Tibial artery (tissue), 4 donors: ENCODE measurements at regions of chr4 and their contacts with region 1.

Region 1: GRCh38 chr4:38179690-38180377 is 219.6 kb downstream of the PTTG2 start:
- DNase-seq: peak; percentile 69 to 73
- H3K4me3 ChIP-seq: no peak overlapping the region
- H3K27ac ChIP-seq: no peak overlapping the region
- H3K4me1 ChIP-seq: peaks cover 0 to 8% (median 3%) of the 10 kb centered on the region in 4 donors
- H3K27me3 ChIP-seq: no peaks in the 10 kb centered on the region
- CTCF ChIP-seq: peak; percentile 92 to 93

Region 2: GRCh38 chr4:38069271-38069760 is 110.5 kb before region 1 on chr4:
- intact Hi-C with region 1: loop called (anchors 1 kb)
- DNase-seq: no peak
- H3K4me3 ChIP-seq: no peak overlapping the region
- H3K27ac ChIP-seq: no peak overlapping the region
- H3K4me1 ChIP-seq: peaks cover 0 to 15% (median 0%) of the 10 kb centered on the region in 4 donors
- H3K27me3 ChIP-seq: no peaks in the 10 kb centered on the region
- CTCF ChIP-seq: no peak

Region 3: DNA sequence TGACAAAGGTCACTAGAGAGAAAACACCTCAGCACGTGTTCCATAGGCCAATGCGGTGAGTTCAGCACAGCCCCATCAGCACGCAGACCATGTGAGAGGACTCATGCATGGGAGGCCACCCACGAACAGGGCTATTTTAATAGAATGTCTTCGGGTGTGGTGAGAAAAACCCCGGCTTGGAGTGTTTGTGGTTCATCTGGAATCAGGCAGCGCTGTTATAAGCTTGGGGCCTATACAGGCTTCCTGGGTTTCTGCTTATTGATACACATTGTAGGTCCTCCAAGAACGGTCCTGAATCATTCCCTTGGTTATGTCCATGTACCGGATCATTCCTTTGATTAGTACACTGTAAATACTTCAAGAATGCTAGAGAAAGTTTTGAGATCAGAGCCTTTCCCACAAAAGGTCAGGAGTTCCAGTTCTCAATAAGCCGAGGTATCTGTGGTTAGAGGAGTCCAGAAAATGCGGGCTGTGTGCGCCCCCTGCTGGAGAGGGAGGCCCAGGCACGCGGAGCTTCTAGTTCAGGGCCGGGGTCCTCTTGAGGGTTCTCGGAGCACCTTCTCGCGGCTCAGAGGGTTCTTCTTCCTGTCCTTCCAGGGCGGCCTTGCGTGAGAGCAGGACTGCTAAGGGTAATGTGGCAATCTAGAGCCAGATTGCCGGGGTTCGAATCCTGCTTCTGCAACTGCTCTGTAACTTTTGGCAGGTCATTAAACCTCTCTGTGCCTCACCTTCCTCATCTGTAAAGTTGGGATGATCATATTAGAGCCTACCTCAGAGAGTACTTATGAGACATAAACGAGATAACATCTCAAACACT is 551.2 kb after region 1 on chr4:
- intact Hi-C with region 1: loop called (anchors 2 kb)
- DNase-seq: peak; percentile 72 to 88
- H3K4me3 ChIP-seq: no peak overlapping the region
- H3K27ac ChIP-seq: no peak overlapping the region
- H3K4me1 ChIP-seq: peaks cover 0 to 6% (median 2%) of the 10 kb centered on the region in 4 donors
- H3K27me3 ChIP-seq: no peaks in the 10 kb centered on the region
- CTCF ChIP-seq: peak; percentile 89

Region 4: DNA sequence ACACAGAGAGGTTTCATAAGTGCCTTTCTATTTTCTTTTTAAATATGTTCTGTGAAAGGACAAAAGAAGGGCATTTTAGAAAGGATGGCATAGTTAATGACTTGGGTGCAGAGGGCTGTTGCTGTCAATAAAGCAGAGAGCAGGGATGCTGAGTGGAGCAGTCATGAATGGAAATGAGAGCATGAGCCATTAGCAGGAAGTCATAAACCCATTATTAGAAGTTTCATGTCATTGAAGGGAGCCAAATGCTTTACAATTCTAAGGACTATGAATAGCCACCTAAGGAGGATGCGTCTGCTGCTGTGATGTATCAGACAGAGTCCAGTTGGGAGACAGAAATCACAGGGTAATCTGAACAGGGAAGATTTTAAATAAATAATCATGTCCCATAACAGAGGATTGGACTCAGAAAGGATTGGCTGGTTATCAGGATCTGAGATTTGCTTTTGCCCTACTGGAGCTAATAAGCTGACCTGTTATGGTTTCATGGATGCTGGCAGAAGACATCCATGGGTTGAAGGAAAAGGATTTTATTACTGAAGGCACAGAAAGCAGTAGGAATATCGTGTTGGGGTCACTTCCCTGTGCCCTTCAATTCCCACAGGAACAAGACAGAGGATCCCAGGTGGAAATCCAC is 955.0 kb after region 1 on chr4:
- intact Hi-C with region 1: no loop called
- DNase-seq: no peak
- H3K4me3 ChIP-seq: no peak overlapping the region
- H3K27ac ChIP-seq: no peak overlapping the region
- H3K4me1 ChIP-seq: peaks cover 0 to 8% (median 4%) of the 10 kb centered on the region in 4 donors
- H3K27me3 ChIP-seq: no peaks in the 10 kb centered on the region
- CTCF ChIP-seq: no peak